Naive thymus-derived CD4-positive, alpha-beta T cell (primary cell): ENCODE measurements at regions of chr20 and their contacts with region 1.

Region 1: DNA sequence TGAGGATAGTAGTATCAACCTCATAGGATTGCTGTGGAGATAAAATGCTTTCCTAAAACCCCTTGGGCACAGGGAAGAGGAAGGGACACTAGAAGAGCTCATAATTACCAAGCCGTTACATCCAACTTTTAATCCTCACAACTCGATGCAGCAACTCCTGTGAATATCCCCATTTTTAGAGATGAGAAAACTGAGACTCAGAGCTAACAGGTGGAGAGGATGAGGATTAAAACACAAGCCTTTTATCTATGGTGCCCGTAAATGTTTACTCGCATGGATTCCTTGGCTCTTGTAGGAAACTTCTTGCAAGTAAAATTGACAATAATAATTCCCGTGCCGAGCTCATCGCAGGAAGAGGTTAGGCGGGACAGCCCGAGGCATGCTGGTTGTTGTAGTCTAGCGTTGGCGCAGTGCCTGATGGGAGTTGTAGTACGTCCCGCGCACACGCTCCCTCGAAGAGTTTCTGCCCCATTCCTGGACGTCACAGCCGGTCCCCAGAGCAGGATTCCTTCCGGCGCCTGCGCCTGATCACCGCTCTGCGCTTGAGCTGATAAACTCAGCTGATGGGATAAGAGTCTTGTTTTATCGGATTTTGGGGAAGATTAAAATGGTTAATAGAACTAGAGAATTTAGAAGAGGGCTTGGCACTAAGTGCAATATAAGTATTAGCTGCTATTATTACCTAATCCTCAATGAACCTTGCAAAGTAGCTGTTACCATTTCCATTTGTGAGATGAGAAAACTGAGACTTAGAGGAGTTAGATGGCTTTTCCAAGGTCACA is 2.8 kb upstream of the UBE2V1 start:
- DNase-seq: peak; percentile 69 to 91 (median 87)
- ATAC-seq: peak; percentile 90
- H3K4me3 ChIP-seq: peak overlapping the region; percentile 58
- H3K4me3 Mint-ChIP-seq: peak overlapping the region; percentile 78 to 97 (median 90)
- H3K27ac ChIP-seq: peak overlapping the region; percentile 76
- H3K27ac Mint-ChIP-seq: peak overlapping the region; percentile 70 to 98 (median 92)
- H3K4me1 ChIP-seq: peaks cover 38 to 39% of the 10 kb centered on the region in 2 donors
- H3K4me1 Mint-ChIP-seq: peaks cover 37 to 55% (median 51%) of the 10 kb centered on the region in 7 donors
- H3K27me3 ChIP-seq: no peaks in the 10 kb centered on the region
- H3K27me3 Mint-ChIP-seq: no peaks in the 10 kb centered on the region

Region 2: DNA sequence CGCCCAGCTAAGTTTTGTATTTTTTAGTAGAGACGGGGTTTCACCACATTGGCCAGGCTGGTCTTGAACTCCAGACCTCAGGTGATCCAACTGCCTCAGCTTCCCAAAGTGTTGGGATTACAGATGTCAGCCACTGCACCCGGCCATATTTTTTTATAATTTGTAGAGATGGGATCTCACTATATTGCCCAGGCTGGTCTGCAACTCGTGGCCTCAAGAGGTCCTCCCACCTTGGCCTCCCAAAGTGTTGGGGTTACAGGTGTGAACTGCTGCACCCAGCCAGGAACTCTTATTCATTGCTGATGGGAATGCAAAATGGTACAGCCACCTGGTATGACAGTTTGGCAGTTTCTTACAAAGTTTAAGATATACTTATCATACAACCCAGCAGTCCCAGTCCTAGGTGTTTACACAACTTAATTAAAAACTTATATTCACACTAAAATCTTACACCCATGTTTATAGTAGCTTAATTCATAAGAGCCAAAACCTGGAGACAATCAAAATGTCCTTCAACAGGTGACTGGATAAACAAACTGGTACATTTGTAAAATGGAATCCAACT is 916.0 kb before region 1 on chr20:
- CTCF ChIA-PET with region 1: no interaction called
- POLR2A ChIA-PET with region 1: no interaction called
- intact Hi-C with region 1: no loop called
- DNase-seq: no peak
- ATAC-seq: no peak
- H3K4me3 ChIP-seq: no peak overlapping the region
- H3K4me3 Mint-ChIP-seq: no peak overlapping the region
- H3K27ac ChIP-seq: no peak overlapping the region
- H3K27ac Mint-ChIP-seq: no peak overlapping the region
- H3K4me1 ChIP-seq: no peaks in the 10 kb centered on the region
- H3K4me1 Mint-ChIP-seq: no peaks in the 10 kb centered on the region
- H3K27me3 ChIP-seq: no peaks in the 10 kb centered on the region
- H3K27me3 Mint-ChIP-seq: no peaks in the 10 kb centered on the region

Region 3: GRCh38 chr20:49812463-49813304 is 303.1 kb before region 1 on chr20 and contains the start of gene SLC9A8:
- CTCF ChIA-PET with region 1: no interaction called
- POLR2A ChIA-PET with region 1: interaction called, 4 read pairs
- intact Hi-C with region 1: loop called in 1 of 2 experiments (anchors 10 kb)
- DNase-seq: peak; percentile 67 to 85 (median 75)
- ATAC-seq: peak; percentile 93
- H3K4me3 ChIP-seq: peak within 1 kb of the TSS; percentile 81
- H3K4me3 Mint-ChIP-seq: peak within 1 kb of the TSS; percentile 90 to 99 (median 94)
- H3K27ac ChIP-seq: peak within 1 kb of the TSS; percentile 95
- H3K27ac Mint-ChIP-seq: peak within 1 kb of the TSS; percentile 94 to 98 (median 96)
- H3K4me1 ChIP-seq: peaks cover 12 to 17% of the 10 kb centered on the region in 2 donors
- H3K4me1 Mint-ChIP-seq: peaks cover 13 to 44% (median 39%) of the 10 kb centered on the region in 7 donors
- H3K27me3 ChIP-seq: no peaks in the 10 kb centered on the region
- H3K27me3 Mint-ChIP-seq: no peaks in the 10 kb centered on the region
- total RNA-seq, gene SLC9A8: 21.7 to 42.5 (median 25.7) TPM

Region 4: DNA sequence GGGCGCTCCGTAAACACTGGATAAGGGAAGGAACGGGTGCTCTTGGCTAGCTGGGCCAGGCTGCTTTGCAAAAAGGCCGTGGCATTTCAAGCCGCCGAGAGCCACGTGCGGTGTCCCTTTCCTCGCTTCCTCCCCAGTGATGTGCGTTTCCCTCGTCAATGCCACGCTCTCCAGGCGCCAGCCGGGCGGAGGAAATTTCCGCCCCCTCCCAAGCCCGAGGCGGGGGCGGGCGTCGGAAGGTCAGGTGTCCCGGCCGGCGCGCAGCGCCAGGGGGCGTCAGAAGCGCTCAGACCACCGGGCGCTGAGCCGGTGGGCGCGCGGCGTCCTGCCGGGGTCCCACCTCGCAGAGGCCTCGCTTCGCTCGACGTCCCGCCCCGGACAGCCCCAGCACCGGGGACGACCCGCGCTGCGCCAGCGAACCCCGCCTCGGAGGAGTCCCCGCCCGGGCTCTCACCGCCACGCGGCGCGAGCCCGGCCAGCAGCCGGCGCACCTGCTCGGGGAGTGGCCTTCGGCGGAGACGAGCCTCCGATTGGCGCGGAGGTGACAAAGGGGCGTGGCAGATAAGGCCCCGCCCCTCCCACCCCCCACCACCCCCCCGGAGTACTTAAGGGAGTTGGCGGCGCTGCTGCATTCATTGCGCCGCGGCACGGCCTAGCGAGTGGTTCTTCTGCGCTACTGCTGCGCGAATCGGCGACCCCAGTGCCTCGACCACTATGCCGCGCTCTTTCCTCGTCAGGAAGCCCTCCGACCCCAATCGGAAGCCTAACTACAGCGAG is 133.2 kb before region 1 on chr20 and contains the start of gene SNAI1:
- CTCF ChIA-PET with region 1: interaction called, 6 read pairs
- POLR2A ChIA-PET with region 1: interaction called, 3 read pairs
- intact Hi-C with region 1: loop called (anchors 1 kb)
- DNase-seq: peak; percentile 67 to 86 (median 84)
- ATAC-seq: peak; percentile 97
- H3K4me3 ChIP-seq: peak within 1 kb of the TSS; percentile 57
- H3K4me3 Mint-ChIP-seq: peak within 1 kb of the TSS; percentile 67 to 85 (median 76)
- H3K27ac ChIP-seq: peak within 1 kb of the TSS; percentile 72
- H3K27ac Mint-ChIP-seq: peak within 1 kb of the TSS; percentile 2 to 88 (median 68)
- H3K4me1 ChIP-seq: peaks cover 11 to 18% of the 10 kb centered on the region in 2 donors
- H3K4me1 Mint-ChIP-seq: peaks cover 12 to 31% (median 25%) of the 10 kb centered on the region in 7 donors
- H3K27me3 ChIP-seq: no peaks in the 10 kb centered on the region
- H3K27me3 Mint-ChIP-seq: peaks cover 0 to 37% (median 0%) of the 10 kb centered on the region in 5 donors
- total RNA-seq, gene SNAI1: 0.22 to 7.0 (median 0.34) TPM

Region 5: DNA sequence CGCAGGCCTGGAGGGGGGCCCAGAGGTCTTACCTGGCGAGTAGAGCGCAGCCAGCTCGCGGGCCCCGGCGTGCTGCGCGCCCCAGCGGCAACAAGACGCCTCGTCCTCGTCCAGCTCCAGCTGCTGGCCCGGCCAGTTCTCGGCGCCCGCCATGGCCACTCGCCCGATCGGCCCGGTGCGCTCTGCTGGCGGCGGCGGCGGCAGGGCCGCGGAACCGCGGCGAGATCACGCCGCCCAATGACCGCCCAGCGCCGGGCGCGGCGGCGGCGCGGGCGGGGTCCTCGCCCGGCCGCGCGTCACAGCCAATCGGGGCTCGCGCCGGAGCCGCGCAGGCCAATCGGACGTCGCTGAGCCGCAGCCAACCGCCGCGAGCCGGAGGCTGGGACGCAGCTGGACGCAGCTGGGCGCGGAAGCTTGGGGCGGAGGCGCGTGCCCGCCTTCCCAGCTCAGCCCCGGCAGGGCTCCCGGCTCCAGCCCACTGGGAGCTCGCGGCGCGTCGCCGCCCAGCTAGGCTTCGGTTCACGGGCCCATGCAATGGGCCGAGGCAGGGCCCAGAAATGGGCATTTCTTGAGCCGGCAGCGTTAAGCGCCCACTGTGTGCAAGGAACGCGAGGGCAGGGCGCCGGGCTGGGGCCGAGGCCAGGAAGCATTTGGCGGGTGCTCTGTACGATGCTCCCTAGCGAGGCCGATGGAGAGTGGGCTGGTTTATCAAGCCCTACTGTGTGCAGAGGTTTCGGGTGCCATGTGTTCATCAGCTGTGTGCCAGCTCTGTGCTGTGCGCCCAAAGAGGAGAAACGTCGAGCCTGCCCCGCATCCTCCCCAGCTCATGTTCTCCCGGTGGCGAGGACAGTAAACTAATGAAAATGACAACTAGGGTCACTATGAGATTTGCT is 37.9 kb after region 1 on chr20 and contains the start of gene PEDS1:
- CTCF ChIA-PET with region 1: interaction called, 41 read pairs
- POLR2A ChIA-PET with region 1: interaction called, 131 read pairs
- intact Hi-C with region 1: loop called (anchors 1 to 2 kb)
- DNase-seq: peak; percentile 72 to 89 (median 81)
- ATAC-seq: peak; percentile 99
- H3K4me3 ChIP-seq: peak within 1 kb of the TSS; percentile 91
- H3K4me3 Mint-ChIP-seq: peak within 1 kb of the TSS; percentile 81 to 93 (median 89)
- H3K27ac ChIP-seq: peak within 1 kb of the TSS; percentile 93
- H3K27ac Mint-ChIP-seq: peak within 1 kb of the TSS; percentile 87 to 98 (median 93)
- H3K4me1 ChIP-seq: peaks cover 22 to 24% of the 10 kb centered on the region in 2 donors
- H3K4me1 Mint-ChIP-seq: peaks cover 38 to 50% (median 43%) of the 10 kb centered on the region in 7 donors
- H3K27me3 ChIP-seq: no peaks in the 10 kb centered on the region
- H3K27me3 Mint-ChIP-seq: no peaks in the 10 kb centered on the region
- total RNA-seq, gene PEDS1: 16.0 to 27.6 (median 20.8) TPM

Region 6: GRCh38 chr20:50484276-50484976 is 368.6 kb after region 1 on chr20:
- CTCF ChIA-PET with region 1: no interaction called
- POLR2A ChIA-PET with region 1: interaction called, 4 read pairs
- intact Hi-C with region 1: loop called in 1 of 2 experiments (anchors 5 kb)
- DNase-seq: no peak
- ATAC-seq: no peak
- H3K4me3 ChIP-seq: peak overlapping the region; percentile 77
- H3K4me3 Mint-ChIP-seq: peak overlapping the region; percentile 82 to 99 (median 93)
- H3K27ac ChIP-seq: peak overlapping the region; percentile 91
- H3K27ac Mint-ChIP-seq: peak overlapping the region; percentile 92 to 99 (median 96)
- H3K4me1 ChIP-seq: peaks cover 6 to 17% of the 10 kb centered on the region in 2 donors
- H3K4me1 Mint-ChIP-seq: peaks cover 20 to 38% (median 24%) of the 10 kb centered on the region in 7 donors
- H3K27me3 ChIP-seq: no peaks in the 10 kb centered on the region
- H3K27me3 Mint-ChIP-seq: no peaks in the 10 kb centered on the region